Heart right ventricle (tissue), 16 donors: ENCODE measurements at regions of chr3 and their contacts with region 1.

Region 1: GRCh38 chr3:4722103-4722502 is 229.0 kb downstream of the ITPR1 start:
- DNase-seq: peak; percentile 37 to 41
- ATAC-seq: peak; percentile 59 to 84 (median 68)
- H3K4me3 ChIP-seq: no peak overlapping the region
- H3K27ac ChIP-seq: peak overlapping the region in 7 of 10 donors; percentile 19 to 79 (median 74)
- H3K4me1 ChIP-seq: peaks cover 12 to 69% (median 44%) of the 10 kb centered on the region in 9 donors
- H3K27me3 ChIP-seq: no peaks in the 10 kb centered on the region
- CTCF ChIP-seq: peak in 8 of 9 donors; percentile 8 to 67 (median 52)

Region 2: GRCh38 chr3:4656059-4656458 is 66.0 kb before region 1 on chr3:
- intact Hi-C with region 1: no loop called
- DNase-seq: peak; percentile 52 to 67
- ATAC-seq: peak; percentile 83 to 92 (median 88)
- H3K4me3 ChIP-seq: no peak overlapping the region
- H3K27ac ChIP-seq: peak overlapping the region in 4 of 10 donors; percentile 32 to 64 (median 40)
- H3K4me1 ChIP-seq: peaks cover 0 to 18% (median 11%) of the 10 kb centered on the region in 9 donors
- H3K27me3 ChIP-seq: no peaks in the 10 kb centered on the region
- CTCF ChIP-seq: peak; percentile 60 to 91 (median 81)

Region 3: DNA sequence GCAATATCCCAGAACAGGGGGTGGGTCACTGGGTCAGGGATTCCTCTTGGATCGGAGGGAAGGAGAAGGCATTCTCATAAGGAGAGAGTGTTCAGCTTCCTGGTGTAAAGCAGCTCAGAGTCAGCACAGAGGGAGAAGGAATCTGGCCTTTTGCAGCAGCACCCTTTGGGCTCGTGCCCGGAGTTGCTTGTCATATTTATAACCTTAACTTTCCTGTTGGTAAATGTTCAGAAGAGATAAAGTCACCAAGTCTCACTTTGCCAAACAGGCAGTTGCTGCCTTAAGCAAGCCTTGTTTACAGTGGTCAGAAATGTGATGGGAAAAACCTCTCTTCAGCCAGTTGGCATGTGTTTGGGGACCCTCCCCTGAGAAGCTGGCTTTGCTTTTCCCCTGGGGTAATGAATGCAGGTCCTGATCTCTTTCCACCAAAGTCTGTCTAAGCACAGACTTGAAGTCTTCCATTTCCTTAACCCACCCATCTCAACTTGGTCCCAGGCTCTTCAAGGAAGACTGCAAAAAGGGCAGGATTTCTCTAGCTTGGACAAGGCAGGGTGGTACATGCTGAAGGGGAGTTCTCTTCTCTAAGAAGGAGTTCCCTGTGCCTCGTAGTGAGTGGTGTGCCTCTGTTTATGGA is 50.2 kb after region 1 on chr3:
- intact Hi-C with region 1: loop called in 1 of 10 experiments (anchors 5 kb)
- DNase-seq: peak; percentile 84 to 86
- ATAC-seq: peak; percentile 85 to 92 (median 91)
- H3K4me3 ChIP-seq: peak overlapping the region in 1 of 10 donors; percentile 5
- H3K27ac ChIP-seq: peak overlapping the region; percentile 71 to 89 (median 84)
- H3K4me1 ChIP-seq: peaks cover 17 to 46% (median 31%) of the 10 kb centered on the region in 9 donors
- H3K27me3 ChIP-seq: no peaks in the 10 kb centered on the region
- CTCF ChIP-seq: no peak

Region 4: DNA sequence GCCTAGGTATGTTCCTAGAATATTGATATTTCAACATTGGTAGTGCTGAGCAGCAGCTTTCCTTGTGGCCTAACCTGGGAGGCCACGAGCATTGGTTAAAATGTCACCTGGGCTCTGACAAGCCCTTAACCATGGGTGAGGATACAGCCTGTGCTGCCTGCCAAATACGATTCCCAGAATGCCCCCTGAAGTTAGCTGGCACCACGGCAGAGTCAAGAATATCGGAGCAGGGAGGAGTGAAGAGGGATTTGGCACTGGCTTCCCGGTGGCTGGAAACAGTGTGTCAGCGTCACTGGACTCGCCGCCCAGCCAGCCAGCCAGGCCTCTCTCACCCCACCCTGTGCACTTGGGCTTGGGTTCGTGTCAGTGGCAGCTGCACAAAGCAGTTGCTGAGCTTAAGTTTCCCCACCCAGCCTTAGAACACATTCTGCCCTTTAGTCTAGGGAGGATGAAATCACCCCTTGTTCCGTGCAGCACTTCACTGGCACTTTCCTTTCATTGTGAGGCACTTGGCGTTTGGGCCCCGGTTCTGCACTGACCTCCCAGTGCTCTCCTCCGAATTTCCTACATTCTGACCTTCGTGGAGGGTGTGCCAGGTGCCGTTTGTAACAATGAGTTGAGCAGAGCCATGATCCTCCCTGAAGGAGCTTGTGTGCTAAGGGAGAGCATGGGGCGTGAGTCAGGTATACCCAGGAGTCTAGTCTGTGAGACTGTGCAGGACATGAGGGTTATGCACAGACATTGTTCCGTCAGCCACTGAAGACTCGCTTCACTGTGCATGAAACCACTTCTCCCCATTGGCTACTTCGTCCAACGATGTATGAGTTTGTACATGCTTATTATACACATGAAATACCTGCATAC is 104.4 kb after region 1 on chr3:
- intact Hi-C with region 1: loop called in 3 of 10 experiments (anchors 2 to 5 kb)
- DNase-seq: peak; percentile 85 to 87
- ATAC-seq: peak; percentile 85 to 96 (median 90)
- H3K4me3 ChIP-seq: peak overlapping the region in 4 of 10 donors; percentile 5 to 16 (median 10)
- H3K27ac ChIP-seq: peak overlapping the region; percentile 21 to 92 (median 85)
- H3K4me1 ChIP-seq: peaks cover 16 to 84% (median 44%) of the 10 kb centered on the region in 9 donors
- H3K27me3 ChIP-seq: no peaks in the 10 kb centered on the region
- CTCF ChIP-seq: no peak

Region 5: GRCh38 chr3:4866841-4867240 is 144.7 kb after region 1 on chr3:
- intact Hi-C with region 1: loop called in 2 of 10 experiments (anchors 5 to 10 kb)
- DNase-seq: peak in 1 of 2 donors; percentile 19
- ATAC-seq: peak in 2 of 8 donors; percentile 1 to 11
- H3K4me3 ChIP-seq: peak overlapping the region in 6 of 10 donors; percentile 48 to 57 (median 56)
- H3K27ac ChIP-seq: peak overlapping the region; percentile 93 to 100 (median 98)
- H3K4me1 ChIP-seq: peaks cover 0 to 42% (median 27%) of the 10 kb centered on the region in 9 donors
- H3K27me3 ChIP-seq: no peaks in the 10 kb centered on the region
- CTCF ChIP-seq: no peak

Region 6: GRCh38 chr3:4877173-4877787 is 155.2 kb after region 1 on chr3:
- intact Hi-C with region 1: loop called in 2 of 10 experiments (anchors 5 to 10 kb)
- DNase-seq: no peak
- ATAC-seq: no peak
- H3K4me3 ChIP-seq: no peak overlapping the region
- H3K27ac ChIP-seq: no peak overlapping the region
- H3K4me1 ChIP-seq: no peaks in the 10 kb centered on the region
- H3K27me3 ChIP-seq: no peaks in the 10 kb centered on the region
- CTCF ChIP-seq: no peak

Region 7: GRCh38 chr3:5026331-5027218 is 304.5 kb after region 1 on chr3:
- intact Hi-C with region 1: loop called in 5 of 10 experiments (anchors 2 to 10 kb)
- DNase-seq: peak; percentile 92 to 93
- ATAC-seq: peak; percentile 91 to 97 (median 95)
- H3K4me3 ChIP-seq: peak overlapping the region; percentile 8 to 63 (median 53)
- H3K27ac ChIP-seq: peak overlapping the region; percentile 75 to 94 (median 86)
- H3K4me1 ChIP-seq: peaks cover 0 to 23% (median 5%) of the 10 kb centered on the region in 9 donors
- H3K27me3 ChIP-seq: no peaks in the 10 kb centered on the region
- CTCF ChIP-seq: peak; percentile 51 to 76 (median 68)